HCT116 (cell line): ENCODE measurements at regions of chr9 and their contacts with region 1.

Region 1: DNA sequence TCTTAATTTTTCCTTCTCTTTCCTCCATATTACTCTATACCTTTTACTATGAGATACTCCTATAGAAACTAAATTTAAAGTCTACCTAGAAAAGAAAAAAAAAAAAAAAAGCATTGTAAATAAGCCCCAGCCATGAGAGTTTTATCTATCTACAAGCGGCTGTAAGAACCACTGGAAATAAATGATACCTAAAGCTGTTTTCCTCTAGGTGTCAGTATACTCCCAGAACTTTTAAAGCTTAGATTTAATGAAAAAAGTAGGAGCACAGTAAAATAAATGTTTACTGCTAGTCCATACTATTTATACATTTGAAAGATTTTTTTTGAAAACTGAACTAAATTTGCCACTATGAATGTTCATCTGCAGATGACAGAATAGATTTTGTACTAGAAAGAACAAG is 26.2 kb downstream of the TYRP1 start:
- DNase-seq: peak; percentile 24
- ATAC-seq: peak; percentile 66
- H3K4me3 ChIP-seq: no peak overlapping the region
- H3K27ac ChIP-seq: no peak overlapping the region
- H3K4me1 ChIP-seq: no peaks in the 10 kb centered on the region
- H3K27me3 ChIP-seq: no peaks in the 10 kb centered on the region
- CTCF ChIP-seq: peak; percentile 31 to 65 (median 58); a peak in 5 of 6 replicates
- POLR2A ChIP-seq: no peak
- RAD21 ChIP-seq: peak; percentile 73

Region 2: GRCh38 chr9:12775679-12776512 is 56.5 kb after region 1 on chr9:
- CTCF ChIA-PET with region 1: interaction called, 10 read pairs
- POLR2A ChIA-PET with region 1: interaction called, 3 read pairs
- RAD21 ChIA-PET with region 1: no interaction called
- intact Hi-C with region 1: no loop called
- DNase-seq: peak; percentile 57
- ATAC-seq: peak; percentile 90
- H3K4me3 ChIP-seq: peak overlapping the region; percentile 75 to 82
- H3K27ac ChIP-seq: peak overlapping the region; percentile 66
- H3K4me1 ChIP-seq: peaks cover 0 to 22% of the 10 kb centered on the region in 2 experiments; a peak in 2 of 4 replicates
- H3K27me3 ChIP-seq: no peaks in the 10 kb centered on the region
- CTCF ChIP-seq: peak; percentile 23 to 45 (median 28); a peak in 4 of 6 replicates
- POLR2A ChIP-seq: no peak
- RAD21 ChIP-seq: peak; percentile 56

Region 3: GRCh38 chr9:12884737-12885414 is 165.4 kb after region 1 on chr9:
- CTCF ChIA-PET with region 1: interaction called, 47 read pairs
- POLR2A ChIA-PET with region 1: no interaction called
- RAD21 ChIA-PET with region 1: interaction called, 5 to 9 read pairs
- intact Hi-C with region 1: loop called (anchors 1 kb)
- DNase-seq: peak; percentile 55
- ATAC-seq: peak; percentile 87
- H3K4me3 ChIP-seq: no peak overlapping the region
- H3K27ac ChIP-seq: no peak overlapping the region
- H3K4me1 ChIP-seq: no peaks in the 10 kb centered on the region
- H3K27me3 ChIP-seq: no peaks in the 10 kb centered on the region
- CTCF ChIP-seq: peak; percentile 45 to 88 (median 60)
- POLR2A ChIP-seq: no peak
- RAD21 ChIP-seq: peak; percentile 94

Region 4: DNA sequence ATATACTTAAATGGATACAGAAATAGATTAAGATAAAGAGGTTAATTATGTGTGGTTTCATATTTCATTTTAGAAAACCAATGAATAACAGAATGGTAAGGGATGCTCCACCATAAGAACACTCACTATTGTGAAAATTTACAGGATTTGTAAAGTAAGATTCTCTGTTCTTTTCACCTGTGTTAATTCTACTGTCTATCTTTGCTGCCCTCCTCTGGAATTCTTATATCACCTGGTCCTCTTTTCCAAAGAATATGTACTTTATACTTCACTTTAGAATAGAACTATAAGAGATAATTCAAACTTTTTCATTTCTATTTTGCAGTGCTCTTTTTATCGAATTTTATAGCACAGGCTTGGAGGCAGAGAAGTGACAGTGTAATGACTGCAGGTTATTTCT is 268.8 kb after region 1 on chr9:
- CTCF ChIA-PET with region 1: interaction called, 8 read pairs
- POLR2A ChIA-PET with region 1: no interaction called
- RAD21 ChIA-PET with region 1: no interaction called
- intact Hi-C with region 1: loop called (anchors 5 kb)
- DNase-seq: no peak
- ATAC-seq: no peak
- H3K4me3 ChIP-seq: no peak overlapping the region
- H3K27ac ChIP-seq: no peak overlapping the region
- H3K4me1 ChIP-seq: no peaks in the 10 kb centered on the region
- H3K27me3 ChIP-seq: 0 out of 2 replicates have a peak, but pooled peaks cover 6% of the 10 kb centered on the region
- CTCF ChIP-seq: 0 out of 6 replicates have a peak, but pooled peaks of 1 of the 3 experiments have one; percentile 16
- POLR2A ChIP-seq: no peak
- RAD21 ChIP-seq: peak; percentile 44

Region 5: DNA sequence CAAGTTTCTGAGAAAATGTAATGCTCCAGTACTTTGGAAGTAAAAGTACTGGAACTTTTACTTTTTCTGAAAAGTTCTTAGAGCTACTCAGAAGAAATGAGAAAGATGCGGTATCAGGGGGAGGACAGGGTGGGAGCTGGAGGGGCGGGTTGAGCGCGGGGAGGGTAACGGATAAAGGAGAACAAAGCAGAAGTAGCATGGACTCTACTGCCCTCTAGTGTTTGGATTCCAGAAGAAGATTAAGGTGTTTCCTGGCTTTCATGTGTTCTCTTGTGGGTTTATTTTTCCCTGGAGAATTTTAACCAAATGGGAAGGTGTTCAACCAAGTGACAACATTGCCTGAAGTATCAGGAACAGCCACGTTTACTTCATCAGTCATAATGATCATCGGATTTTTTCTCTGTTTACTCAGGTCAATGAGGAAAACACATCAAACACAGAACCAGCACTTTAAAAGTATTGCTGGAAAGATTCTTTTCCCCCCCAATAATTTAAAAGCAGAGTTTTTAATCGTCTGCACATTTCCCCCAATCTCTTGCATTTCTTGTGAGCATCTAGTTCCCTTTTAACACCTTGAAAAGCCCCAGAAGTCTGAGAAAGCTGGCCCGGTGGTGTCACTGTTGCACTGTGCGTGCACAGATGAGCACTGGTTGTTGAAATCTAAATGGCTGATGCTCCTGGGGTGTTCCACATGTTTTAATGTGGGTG is 369.4 kb after region 1 on chr9:
- CTCF ChIA-PET with region 1: interaction called, 13 read pairs
- POLR2A ChIA-PET with region 1: no interaction called
- RAD21 ChIA-PET with region 1: no interaction called
- intact Hi-C with region 1: loop called (anchors 1 kb)
- DNase-seq: peak; percentile 41
- ATAC-seq: peak; percentile 81
- H3K4me3 ChIP-seq: no peak overlapping the region
- H3K27ac ChIP-seq: no peak overlapping the region
- H3K4me1 ChIP-seq: no peaks in the 10 kb centered on the region
- H3K27me3 ChIP-seq: peaks cover 17% of the 10 kb centered on the region; the same call in 1 of the 2 replicates
- CTCF ChIP-seq: peak; percentile 27 to 73 (median 54); a peak in 5 of 6 replicates
- POLR2A ChIP-seq: no peak
- RAD21 ChIP-seq: peak; percentile 66